Esophagus squamous epithelium (tissue), 5 donors: ENCODE measurements at regions of chr1 and their contacts with region 1.

Region 1: DNA sequence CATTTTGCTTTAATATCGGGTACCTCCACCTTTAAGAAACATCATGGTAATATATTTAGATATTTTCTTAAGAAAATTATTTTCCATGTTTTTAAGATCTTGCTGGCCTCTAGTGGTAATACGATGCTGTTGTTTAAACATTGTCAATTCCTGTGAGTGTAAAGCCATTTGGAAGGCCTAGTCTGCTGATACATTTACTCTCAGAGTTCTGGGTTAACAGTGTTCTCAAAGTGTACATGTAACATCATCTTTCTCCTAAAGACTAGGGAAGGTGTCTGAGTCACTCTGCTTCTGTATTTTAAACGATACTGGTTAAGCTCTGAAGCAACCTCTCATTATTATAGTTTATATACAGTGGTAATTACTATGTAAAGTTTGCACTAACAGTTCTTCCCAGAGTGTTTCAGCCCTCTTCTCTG is 189.1 kb downstream of the RASAL2 start:
- DNase-seq: no peak
- H3K4me3 ChIP-seq: no peak overlapping the region
- H3K27ac ChIP-seq: no peak overlapping the region
- H3K4me1 ChIP-seq: peaks cover 6 to 40% (median 19%) of the 10 kb centered on the region in 3 donors
- H3K27me3 ChIP-seq: no peaks in the 10 kb centered on the region
- CTCF ChIP-seq: peak in 5 of 6 experiments; percentile 16 to 60 (median 43)
- POLR2A ChIP-seq: no peak

Region 2: GRCh38 chr1:177969825-177970371 is 313.1 kb before region 1 on chr1 and contains the start of gene SEC16B:
- intact Hi-C with region 1: no loop called
- DNase-seq: no peak
- H3K4me3 ChIP-seq: peak within 1 kb of the TSS in 1 of 4 donors; percentile 32
- H3K27ac ChIP-seq: no peak within 1 kb of the TSS
- H3K4me1 ChIP-seq: no peaks in the 10 kb centered on the region
- H3K27me3 ChIP-seq: no peaks in the 10 kb centered on the region
- CTCF ChIP-seq: no peak
- POLR2A ChIP-seq: no peak
- total RNA-seq, gene SEC16B: 0.61 to 2.1 (median 1.3) TPM

Region 3: GRCh38 chr1:178031856-178032320 is 251.1 kb before region 1 on chr1:
- intact Hi-C with region 1: loop called (anchors 10 kb)
- DNase-seq: peak; percentile 3
- H3K4me3 ChIP-seq: no peak overlapping the region
- H3K27ac ChIP-seq: no peak overlapping the region
- H3K4me1 ChIP-seq: peaks cover 0 to 16% (median 2%) of the 10 kb centered on the region in 3 donors
- H3K27me3 ChIP-seq: no peaks in the 10 kb centered on the region
- CTCF ChIP-seq: peak; percentile 54 to 87 (median 78)
- POLR2A ChIP-seq: no peak